Transverse colon (tissue), 4 donors: ENCODE measurements at regions of chr11 and their contacts with region 1.

Region 1: DNA sequence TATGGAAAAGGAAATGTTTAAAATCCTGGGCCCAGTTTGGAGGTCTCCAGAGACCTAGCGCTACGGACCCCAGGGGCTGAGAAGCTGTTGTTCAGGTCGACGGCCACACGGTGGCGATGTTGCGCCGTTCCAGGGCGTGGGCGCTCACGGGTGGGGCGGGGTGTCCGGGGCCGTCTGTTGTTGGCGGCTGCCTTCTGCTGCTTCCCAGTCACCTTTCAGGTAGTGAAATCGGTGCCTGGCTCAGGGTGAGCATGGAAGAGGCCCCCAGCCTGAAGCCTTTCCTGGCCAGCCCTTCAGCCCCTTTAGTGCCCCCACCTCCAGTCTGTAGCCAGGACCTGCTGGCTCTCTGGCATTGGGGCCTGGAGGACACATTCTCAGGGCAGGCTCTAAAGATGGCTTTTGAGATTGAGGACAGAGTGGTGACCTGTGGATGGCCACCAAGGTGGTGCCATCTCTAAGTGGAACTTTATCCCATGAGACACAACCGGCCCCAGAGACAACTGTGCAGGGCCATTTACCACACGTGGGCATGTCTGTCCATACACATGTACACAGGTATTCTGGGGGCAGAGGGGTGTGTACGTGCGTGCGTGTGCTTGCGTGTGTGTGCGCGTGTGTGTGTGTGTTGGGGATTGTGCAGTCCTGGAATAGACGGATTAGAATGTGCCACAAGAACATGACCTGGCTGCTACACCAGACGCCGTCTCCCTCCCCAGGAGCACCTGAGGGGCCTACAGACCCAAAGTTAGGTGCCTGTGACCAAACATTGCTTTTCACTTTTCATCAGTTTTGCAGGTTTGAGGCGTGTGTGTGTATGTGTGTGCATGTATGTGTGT is 53.8 kb downstream of the ST14 start:
- DNase-seq: peak; percentile 75
- H3K4me3 ChIP-seq: no peak overlapping the region
- H3K27ac ChIP-seq: peak overlapping the region in 1 of 4 donors; percentile 9
- H3K4me1 ChIP-seq: peaks cover 0 to 7% (median 2%) of the 10 kb centered on the region in 4 donors
- H3K27me3 ChIP-seq: no peaks in the 10 kb centered on the region
- CTCF ChIP-seq: peak; percentile 92 to 98 (median 97)
- EP300 ChIP-seq: no peak
- POLR2A ChIP-seq: no peak

Region 2: GRCh38 chr11:130383344-130384211 is 170.2 kb after region 1 on chr11:
- in situ Hi-C with region 1: loop called in 2 of 4 experiments (anchors 25 kb)
- intact Hi-C with region 1: loop called (anchors 10 kb)
- DNase-seq: no peak
- H3K4me3 ChIP-seq: no peak overlapping the region
- H3K27ac ChIP-seq: peak overlapping the region in 2 of 4 donors; percentile 27 to 32
- H3K4me1 ChIP-seq: peaks cover 0 to 5% (median under 1%) of the 10 kb centered on the region in 4 donors
- H3K27me3 ChIP-seq: no peaks in the 10 kb centered on the region
- CTCF ChIP-seq: no peak
- EP300 ChIP-seq: no peak
- POLR2A ChIP-seq: no peak

Region 3: GRCh38 chr11:130390071-130390758 is 176.9 kb after region 1 on chr11:
- in situ Hi-C with region 1: loop called in 2 of 4 experiments (anchors 25 kb)
- intact Hi-C with region 1: loop called (anchors 10 kb)
- DNase-seq: no peak
- H3K4me3 ChIP-seq: no peak overlapping the region
- H3K27ac ChIP-seq: peak overlapping the region; percentile 56 to 75 (median 61)
- H3K4me1 ChIP-seq: peaks cover 9 to 29% (median 22%) of the 10 kb centered on the region in 4 donors
- H3K27me3 ChIP-seq: no peaks in the 10 kb centered on the region
- CTCF ChIP-seq: peak in 3 of 5 experiments; percentile 9 to 20 (median 14)
- EP300 ChIP-seq: peak; percentile 52
- POLR2A ChIP-seq: no peak

Region 4: DNA sequence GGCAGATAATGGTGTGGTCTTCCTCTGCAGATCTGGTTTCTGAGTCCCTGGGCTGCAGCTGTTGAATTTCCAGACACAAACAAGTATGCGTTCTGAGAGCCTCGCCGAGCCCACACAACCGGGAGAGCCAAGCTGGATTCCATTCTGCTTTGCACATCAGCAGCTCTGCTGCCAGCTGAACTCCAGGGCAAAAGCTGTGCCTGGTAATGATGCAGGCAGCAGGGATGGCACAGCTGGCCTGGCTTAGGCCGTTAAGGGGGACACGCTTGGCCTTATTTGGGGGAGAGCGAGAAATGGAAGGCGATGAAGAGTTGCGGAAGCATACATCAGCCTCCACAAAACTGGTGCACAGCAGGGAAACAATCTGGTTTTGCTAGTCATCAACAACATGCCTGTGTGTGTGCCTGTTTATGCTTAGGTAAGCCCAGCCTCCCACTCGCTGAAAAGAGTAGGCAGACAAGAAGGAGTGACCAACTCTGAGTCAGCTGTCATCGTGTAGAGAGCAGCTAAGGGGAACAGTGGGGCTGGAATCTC is 190.0 kb after region 1 on chr11:
- in situ Hi-C with region 1: loop called in 3 of 4 experiments (anchors 25 kb)
- intact Hi-C with region 1: no loop called
- DNase-seq: peak; percentile 44
- H3K4me3 ChIP-seq: no peak overlapping the region
- H3K27ac ChIP-seq: peak overlapping the region; percentile 48 to 84 (median 75)
- H3K4me1 ChIP-seq: peaks cover 9 to 37% (median 19%) of the 10 kb centered on the region in 4 donors
- H3K27me3 ChIP-seq: no peaks in the 10 kb centered on the region
- CTCF ChIP-seq: no peak
- EP300 ChIP-seq: peak; percentile 37
- POLR2A ChIP-seq: no peak

Region 5: GRCh38 chr11:130427581-130428315 is 214.4 kb after region 1 on chr11:
- in situ Hi-C with region 1: loop called in 2 of 4 experiments (anchors 10 to 25 kb)
- intact Hi-C with region 1: loop called (anchors 5 kb)
- DNase-seq: peak; percentile 25
- H3K4me3 ChIP-seq: peak overlapping the region; percentile 31 to 57 (median 44)
- H3K27ac ChIP-seq: peak overlapping the region in 3 of 4 donors; percentile 55 to 72 (median 61)
- H3K4me1 ChIP-seq: peaks cover 0 to 16% (median 5%) of the 10 kb centered on the region in 4 donors
- H3K27me3 ChIP-seq: peaks cover 51% of the 10 kb centered on the region
- CTCF ChIP-seq: peak in 3 of 5 experiments; percentile 21 to 41 (median 33)
- EP300 ChIP-seq: no peak
- POLR2A ChIP-seq: no peak

Region 6: DNA sequence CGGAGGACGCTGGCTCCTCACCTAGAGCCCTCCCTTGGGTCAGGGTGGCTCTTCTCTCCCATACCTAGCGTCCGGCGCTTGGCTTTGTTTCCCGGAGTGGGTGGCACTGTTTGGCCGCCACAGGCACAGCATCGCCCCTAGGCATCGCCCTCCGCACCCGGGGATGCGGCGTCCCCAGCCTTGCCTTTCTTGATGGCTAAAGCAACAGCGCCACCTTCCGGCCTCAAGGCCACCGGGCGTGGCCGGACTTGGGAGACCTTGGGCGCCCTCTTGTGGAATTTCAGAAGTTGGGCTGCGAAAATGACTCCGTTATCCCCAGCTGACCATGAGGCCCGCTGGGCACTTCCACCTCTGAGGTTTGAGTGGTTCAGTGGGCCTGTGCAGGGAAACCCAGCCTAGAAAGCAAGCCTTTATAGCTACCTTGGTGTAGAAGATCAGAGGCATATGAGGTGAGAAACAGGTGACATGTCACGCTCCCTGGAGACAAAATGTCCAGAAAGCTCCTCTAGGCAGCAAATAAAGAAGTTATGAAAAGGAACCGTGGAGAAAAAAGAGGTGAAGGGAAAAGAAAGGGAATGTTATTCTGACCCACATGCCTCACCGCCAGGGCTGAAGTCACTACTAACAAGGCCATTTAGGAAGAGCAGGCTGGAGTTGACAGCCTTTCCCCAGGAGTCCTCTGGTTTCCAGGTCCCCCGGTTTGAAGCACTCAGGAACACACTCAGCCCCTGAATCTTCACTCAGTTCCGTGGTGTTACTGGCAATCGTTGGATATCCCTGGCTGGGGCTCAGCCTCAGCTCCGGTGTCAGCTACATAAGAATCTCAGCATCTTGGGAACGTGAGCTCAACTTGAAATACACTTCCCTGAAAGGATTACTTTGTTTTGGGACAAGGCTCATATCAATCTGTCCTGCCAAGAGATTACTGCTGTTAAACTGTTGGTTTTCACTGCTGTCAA is 648.8 kb after region 1 on chr11:
- in situ Hi-C with region 1: loop called (anchors 25 kb)
- intact Hi-C with region 1: no loop called
- DNase-seq: peak; percentile 92
- H3K4me3 ChIP-seq: no peak overlapping the region
- H3K27ac ChIP-seq: no peak overlapping the region
- H3K4me1 ChIP-seq: peaks cover 0 to 7% (median 2%) of the 10 kb centered on the region in 4 donors
- H3K27me3 ChIP-seq: no peaks in the 10 kb centered on the region
- CTCF ChIP-seq: peak; percentile 99 to 100 (median 100)
- EP300 ChIP-seq: no peak
- POLR2A ChIP-seq: no peak